ENCODE measurements at regions of chr11 and their contacts with region 1.

Region 1: DNA sequence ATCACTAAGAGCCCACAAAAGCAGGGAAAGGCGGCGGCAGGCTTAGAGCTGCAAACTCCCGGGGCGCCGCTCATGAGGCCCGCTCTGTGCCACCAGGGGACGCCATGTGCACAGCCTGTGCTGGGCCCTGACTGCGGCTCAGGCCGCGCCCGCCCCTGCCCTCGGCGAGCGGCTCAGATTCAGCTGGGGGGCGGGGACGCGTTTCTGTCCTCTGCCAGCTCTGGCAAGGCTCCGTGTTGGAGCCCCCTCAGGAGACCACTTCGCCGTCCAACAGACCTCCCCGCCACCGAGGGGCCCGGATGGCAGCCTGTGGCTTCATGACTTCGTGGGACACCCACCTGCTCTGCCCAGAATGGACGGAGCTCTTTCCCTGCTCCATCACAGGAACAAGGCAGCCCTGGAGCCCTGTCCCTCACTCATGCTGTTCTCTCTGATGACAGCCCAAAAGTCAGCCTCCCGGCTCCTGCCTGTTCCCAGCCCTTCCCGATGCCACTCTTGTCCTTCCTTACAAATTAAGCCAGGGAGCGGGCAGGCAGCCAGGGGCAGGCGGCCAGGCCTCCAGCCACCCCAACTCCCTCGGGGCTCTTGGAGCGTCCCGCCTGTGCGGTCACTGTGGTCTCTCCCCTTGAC is 69.1 kb downstream of the NAT10 start:
- DNase-seq: peak; percentile 92
- ATAC-seq: peak; percentile 99

Region 2: DNA sequence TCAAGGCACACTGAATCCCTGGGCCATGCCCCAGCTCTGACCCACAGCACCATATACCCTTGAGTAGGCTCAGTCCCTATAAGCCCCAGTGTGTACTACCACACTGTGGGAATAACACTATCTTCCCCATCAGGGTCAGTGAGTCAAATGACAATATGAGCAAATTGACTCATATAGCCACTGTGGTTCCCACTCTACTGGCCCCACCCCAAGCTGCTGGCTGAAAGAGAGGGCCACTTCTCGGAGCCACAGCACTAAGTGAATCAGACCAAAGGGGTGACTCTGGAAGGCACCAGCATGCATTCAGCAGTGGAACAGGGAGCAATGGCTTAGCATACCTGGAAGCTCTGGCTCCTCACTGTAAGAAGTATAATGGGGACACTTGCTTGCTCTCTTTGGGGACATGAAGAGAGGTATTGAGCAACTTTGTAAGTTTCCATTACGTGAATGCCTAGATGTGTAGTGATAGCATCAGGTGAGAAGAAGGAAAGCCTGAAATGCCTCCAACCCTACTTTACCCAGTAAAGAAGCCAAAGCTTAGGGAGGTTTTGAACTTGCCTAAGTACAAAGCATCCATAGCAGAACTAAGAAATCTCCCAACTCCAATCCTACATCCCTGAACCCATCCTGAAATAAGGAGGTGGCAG is 451.8 kb before region 1 on chr11:
- intact Hi-C with region 1: no loop called
- DNase-seq: no peak
- ATAC-seq: peak; percentile 18

Region 3: GRCh38 chr11:34302046-34302921 is 127.8 kb after region 1 on chr11:
- intact Hi-C with region 1: no loop called
- DNase-seq: no peak
- ATAC-seq: no peak

Region 4: DNA sequence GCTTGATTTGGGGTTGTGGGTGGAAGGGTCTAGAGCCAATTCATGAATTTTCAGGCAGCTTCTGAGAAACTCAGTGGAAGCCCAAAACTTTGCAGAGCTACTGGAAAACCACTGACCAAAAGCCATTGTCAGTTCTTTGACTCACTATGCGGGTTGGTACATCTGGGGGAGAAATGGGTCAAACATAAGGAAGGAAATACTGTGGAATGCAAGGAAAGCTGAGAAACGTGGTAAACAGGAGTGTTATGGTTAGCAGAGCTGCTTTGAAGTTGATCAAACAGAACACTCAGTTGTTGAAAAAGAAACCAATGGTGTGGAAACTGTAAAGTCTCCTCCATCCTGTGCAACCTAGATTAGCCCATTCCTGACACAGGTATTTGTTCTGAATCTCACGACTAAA is 189.6 kb after region 1 on chr11:
- intact Hi-C with region 1: loop called (anchors 5 kb)
- DNase-seq: no peak
- ATAC-seq: no peak

Measured in left ventricle myocardium superior (tissue), 1 donor.